GM13977 (cell line): ENCODE measurements at regions of chr7 and their contacts with region 1.

Region 1: GRCh38 chr7:20598459-20599309 is 16.8 kb upstream of the ABCB5 start:
- DNase-seq: peak; percentile 49
- CTCF ChIP-seq: peak; percentile 81

Region 2: GRCh38 chr7:19747740-19748339 is 850.8 kb before region 1 on chr7:
- in situ Hi-C with region 1: loop called (anchors 10 kb)
- DNase-seq: peak; percentile 44
- CTCF ChIP-seq: peak; percentile 62

Region 3: DNA sequence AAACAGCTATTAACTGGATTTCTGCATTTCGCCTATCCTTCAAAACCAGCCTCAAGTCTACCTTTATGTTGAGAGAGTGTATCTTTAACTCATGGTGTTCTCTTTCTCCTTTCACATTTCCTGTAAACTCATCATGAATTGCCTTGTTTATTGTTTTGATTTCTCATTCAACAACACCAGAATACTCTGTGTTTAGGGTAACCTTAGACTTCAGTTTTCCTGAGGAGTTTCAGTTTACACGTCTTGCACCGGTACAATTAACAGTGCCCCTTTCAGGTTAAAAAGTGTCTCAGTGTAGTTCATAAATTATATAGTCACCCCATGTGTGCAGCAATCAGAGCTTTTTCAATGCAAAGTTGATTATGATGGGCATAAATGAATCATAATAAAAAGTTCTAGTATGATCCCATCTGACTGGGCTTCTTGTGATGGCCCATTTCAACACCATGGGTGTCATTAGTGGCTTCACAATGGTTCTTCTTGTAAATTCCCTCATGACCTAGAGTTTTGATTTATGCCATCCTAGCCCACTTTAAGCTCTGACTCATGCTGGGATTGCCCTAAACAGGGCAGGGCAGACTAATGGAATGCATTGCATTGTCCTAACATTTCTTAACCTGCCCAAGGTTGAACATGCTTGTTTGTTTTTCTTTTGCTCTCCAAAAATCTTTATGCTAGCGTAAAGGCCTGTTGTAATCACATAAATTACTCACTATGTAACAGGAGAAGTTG is 245.9 kb before region 1 on chr7:
- in situ Hi-C with region 1: no loop called
- DNase-seq: no peak
- CTCF ChIP-seq: no peak